Natural killer cell (primary cell): ENCODE measurements at regions of chr5 and their contacts with region 1.

Region 1: GRCh38 chr5:1536322-1536845 is 12.6 kb upstream of the LPCAT1 start:
- DNase-seq: peak; percentile 64 to 91
- ATAC-seq: peak; percentile 92 to 97 (median 95)
- H3K4me3 ChIP-seq: peak overlapping the region; percentile 29
- H3K4me3 Mint-ChIP-seq: peak overlapping the region; percentile 87
- H3K27ac ChIP-seq: peak overlapping the region; percentile 90
- H3K27ac Mint-ChIP-seq: peak overlapping the region; percentile 93 to 99
- H3K4me1 ChIP-seq: peaks cover 39% of the 10 kb centered on the region
- H3K4me1 Mint-ChIP-seq: peaks cover 36 to 37% of the 10 kb centered on the region in 2 donors
- H3K27me3 ChIP-seq: no peaks in the 10 kb centered on the region
- H3K27me3 Mint-ChIP-seq: no peaks in the 10 kb centered on the region
- CTCF ChIP-seq: no peak

Region 2: GRCh38 chr5:1374680-1375055 is 161.7 kb before region 1 on chr5:
- intact Hi-C with region 1: loop called (anchors 10 kb)
- DNase-seq: no peak
- ATAC-seq: no peak
- H3K4me3 ChIP-seq: no peak overlapping the region
- H3K4me3 Mint-ChIP-seq: peak overlapping the region; percentile 55
- H3K27ac ChIP-seq: peak overlapping the region; percentile 39
- H3K27ac Mint-ChIP-seq: peak overlapping the region; percentile 65 to 69
- H3K4me1 ChIP-seq: peaks cover 34% of the 10 kb centered on the region
- H3K4me1 Mint-ChIP-seq: peaks cover 34 to 37% of the 10 kb centered on the region in 2 donors
- H3K27me3 ChIP-seq: no peaks in the 10 kb centered on the region
- H3K27me3 Mint-ChIP-seq: no peaks in the 10 kb centered on the region
- CTCF ChIP-seq: no peak

Region 3: GRCh38 chr5:1414236-1415058 is 121.9 kb before region 1 on chr5:
- intact Hi-C with region 1: no loop called
- DNase-seq: no peak
- ATAC-seq: no peak
- H3K4me3 ChIP-seq: no peak overlapping the region
- H3K4me3 Mint-ChIP-seq: no peak overlapping the region
- H3K27ac ChIP-seq: no peak overlapping the region
- H3K27ac Mint-ChIP-seq: no peak overlapping the region
- H3K4me1 ChIP-seq: no peaks in the 10 kb centered on the region
- H3K4me1 Mint-ChIP-seq: peaks cover 0 to 5% of the 10 kb centered on the region in 2 donors
- H3K27me3 ChIP-seq: peaks cover 2% of the 10 kb centered on the region
- H3K27me3 Mint-ChIP-seq: peaks cover 0 to 14% of the 10 kb centered on the region in 2 donors
- CTCF ChIP-seq: no peak

Region 4: DNA sequence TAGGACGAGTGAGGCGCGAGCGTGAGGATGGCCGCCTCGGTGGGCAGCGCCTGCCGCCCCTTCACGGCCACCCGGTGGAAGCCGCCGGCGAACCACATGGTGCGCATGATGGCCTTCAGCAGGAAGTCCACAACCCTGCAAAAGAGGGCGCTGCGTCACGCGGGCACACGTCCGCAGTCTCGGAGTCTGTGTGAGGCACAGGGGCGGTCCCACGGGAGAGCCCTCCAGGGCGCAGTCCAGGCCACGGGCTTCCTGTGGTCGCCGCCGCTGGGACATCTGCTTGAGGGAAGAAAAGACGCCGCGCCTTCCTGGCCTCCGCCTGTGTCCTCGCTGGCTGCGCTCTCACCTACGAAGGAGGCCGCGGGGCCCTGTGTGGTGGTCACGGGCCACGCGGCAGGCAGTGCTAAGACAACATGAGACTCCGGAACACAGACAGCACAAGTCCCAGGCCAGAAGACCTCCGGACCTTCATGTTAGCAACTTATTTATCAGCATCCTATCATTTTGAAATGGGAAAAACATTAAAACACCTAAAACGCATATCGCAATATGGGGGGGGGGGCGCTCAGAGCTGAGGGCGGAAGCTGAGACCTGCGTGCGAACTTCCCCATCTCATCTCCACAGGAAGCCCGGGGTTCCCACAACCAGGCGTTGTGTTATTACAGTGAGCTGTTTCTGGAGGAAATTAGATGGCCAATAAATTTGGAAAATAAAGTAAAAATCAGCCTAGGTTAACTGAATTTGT is 41.4 kb before region 1 on chr5:
- intact Hi-C with region 1: loop called (anchors 2 kb)
- DNase-seq: peak; percentile 74 to 79
- ATAC-seq: peak; percentile 80 to 84 (median 83)
- H3K4me3 ChIP-seq: peak overlapping the region; percentile 11
- H3K4me3 Mint-ChIP-seq: peak overlapping the region; percentile 82
- H3K27ac ChIP-seq: peak overlapping the region; percentile 92
- H3K27ac Mint-ChIP-seq: peak overlapping the region; percentile 96 to 97
- H3K4me1 ChIP-seq: peaks cover 89% of the 10 kb centered on the region
- H3K4me1 Mint-ChIP-seq: peaks cover 82 to 87% of the 10 kb centered on the region in 2 donors
- H3K27me3 ChIP-seq: no peaks in the 10 kb centered on the region
- H3K27me3 Mint-ChIP-seq: no peaks in the 10 kb centered on the region
- CTCF ChIP-seq: peak; percentile 22

Region 5: DNA sequence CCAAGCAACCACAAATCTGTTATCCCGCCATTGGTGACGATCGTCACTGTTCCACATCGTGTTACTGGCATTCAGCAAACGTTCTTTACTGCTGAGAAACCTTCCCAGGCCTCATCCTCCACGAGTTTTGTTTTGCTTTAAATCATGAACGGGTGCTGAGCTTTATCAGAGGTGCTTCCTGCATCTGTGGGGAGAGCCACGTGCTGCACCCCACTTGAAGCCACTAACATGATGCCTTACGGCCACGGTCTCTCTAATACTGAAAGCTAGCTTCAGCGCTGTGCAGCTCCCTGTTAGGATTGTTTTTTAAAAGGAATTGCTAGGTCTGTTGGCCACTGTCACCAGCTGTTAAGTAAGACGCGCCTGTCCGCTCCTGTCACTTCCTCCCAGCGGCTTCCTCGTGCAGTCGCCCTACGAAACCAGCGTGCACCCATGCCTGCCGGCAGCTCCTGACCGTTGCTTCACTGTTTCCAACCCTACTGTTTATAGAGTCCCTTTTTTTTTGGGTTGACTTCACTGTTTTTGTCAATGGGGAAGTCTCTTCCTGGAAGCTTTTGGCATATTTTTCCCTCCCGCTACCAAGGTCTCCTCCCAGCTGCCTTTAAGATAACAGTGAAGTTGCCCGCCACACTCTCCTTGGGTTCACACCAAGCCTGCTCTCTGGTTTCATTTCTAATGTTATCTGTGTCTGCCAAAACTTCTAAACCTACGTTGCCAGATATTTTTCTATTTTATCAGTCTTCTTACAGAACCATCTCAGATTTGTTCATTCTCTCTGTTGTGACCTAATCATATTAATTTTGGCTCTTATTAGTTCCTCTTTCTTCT is 32.9 kb before region 1 on chr5:
- intact Hi-C with region 1: loop called (anchors 2 kb)
- DNase-seq: peak; percentile 50 to 58
- ATAC-seq: peak; percentile 30 to 51 (median 39)
- H3K4me3 ChIP-seq: peak overlapping the region; percentile 5
- H3K4me3 Mint-ChIP-seq: peak overlapping the region; percentile 83
- H3K27ac ChIP-seq: peak overlapping the region; percentile 89
- H3K27ac Mint-ChIP-seq: peak overlapping the region; percentile 91 to 97
- H3K4me1 ChIP-seq: peaks cover 96% of the 10 kb centered on the region
- H3K4me1 Mint-ChIP-seq: peaks cover 84 to 95% of the 10 kb centered on the region in 2 donors
- H3K27me3 ChIP-seq: no peaks in the 10 kb centered on the region
- H3K27me3 Mint-ChIP-seq: no peaks in the 10 kb centered on the region
- CTCF ChIP-seq: no peak

Region 6: GRCh38 chr5:1521671-1522600 is 14.4 kb before region 1 on chr5:
- intact Hi-C with region 1: loop called (anchors 2 kb)
- DNase-seq: peak in 1 of 2 donors; percentile 17
- ATAC-seq: no peak
- H3K4me3 ChIP-seq: peak overlapping the region; percentile 68
- H3K4me3 Mint-ChIP-seq: peak overlapping the region; percentile 96
- H3K27ac ChIP-seq: peak overlapping the region; percentile 46
- H3K27ac Mint-ChIP-seq: peak overlapping the region; percentile 95 to 96
- H3K4me1 ChIP-seq: peaks cover 71% of the 10 kb centered on the region
- H3K4me1 Mint-ChIP-seq: peaks cover 53 to 73% of the 10 kb centered on the region in 2 donors
- H3K27me3 ChIP-seq: no peaks in the 10 kb centered on the region
- H3K27me3 Mint-ChIP-seq: no peaks in the 10 kb centered on the region
- CTCF ChIP-seq: no peak

Region 7: GRCh38 chr5:1685066-1685465 is 148.7 kb after region 1 on chr5:
- intact Hi-C with region 1: no loop called
- DNase-seq: no peak
- ATAC-seq: no peak
- H3K4me3 ChIP-seq: no peak overlapping the region
- H3K4me3 Mint-ChIP-seq: no peak overlapping the region
- H3K27ac ChIP-seq: no peak overlapping the region
- H3K27ac Mint-ChIP-seq: no peak overlapping the region
- H3K4me1 ChIP-seq: no peaks in the 10 kb centered on the region
- H3K4me1 Mint-ChIP-seq: no peaks in the 10 kb centered on the region
- H3K27me3 ChIP-seq: peaks cover 3% of the 10 kb centered on the region
- H3K27me3 Mint-ChIP-seq: peaks cover 14 to 18% of the 10 kb centered on the region in 2 donors
- CTCF ChIP-seq: no peak